ENCODE measurements at regions of chr18 and their contacts with region 1.

Region 1: GRCh38 chr18:47317824-47318508 is 66.5 kb upstream of the SKOR2 start:
- DNase-seq: no peak
- ATAC-seq: no peak
- H3K4me3 ChIP-seq: no peak overlapping the region
- H3K27ac ChIP-seq: no peak overlapping the region
- H3K4me1 ChIP-seq: no peaks in the 10 kb centered on the region
- H3K27me3 ChIP-seq: no peaks in the 10 kb centered on the region; a peak in 1 of 5 replicates
- CTCF ChIP-seq: no peak
- EP300 ChIP-seq: no peak
- POLR2A ChIP-seq: no peak
- RAD21 ChIP-seq: no peak

Region 2: DNA sequence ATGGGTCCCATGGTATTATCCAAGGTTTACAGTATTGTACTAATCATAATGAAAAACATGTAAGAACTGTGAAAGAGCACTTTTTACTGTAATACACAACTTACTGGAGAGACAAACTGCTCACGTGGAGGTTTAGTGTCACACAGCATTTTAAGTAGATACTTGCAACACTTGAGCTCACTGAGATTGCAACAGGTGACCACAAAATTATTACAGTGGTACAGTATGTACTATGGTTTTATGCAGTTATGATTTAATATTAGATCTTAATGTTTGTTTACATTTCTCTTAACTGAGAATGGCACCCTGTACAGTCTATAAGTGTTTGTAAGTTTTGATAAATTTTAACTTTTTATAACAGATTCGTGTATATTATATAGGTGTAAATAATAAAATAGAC is 52.1 kb after region 1 on chr18:
- CTCF ChIA-PET with region 1: no interaction called
- POLR2A ChIA-PET with region 1: no interaction called
- in situ Hi-C with region 1: no loop called
- intact Hi-C with region 1: loop called (anchors 5 kb)
- DNase-seq: no peak
- ATAC-seq: no peak
- H3K4me3 ChIP-seq: no peak overlapping the region
- H3K27ac ChIP-seq: no peak overlapping the region
- H3K4me1 ChIP-seq: no peaks in the 10 kb centered on the region
- H3K27me3 ChIP-seq: no peaks in the 10 kb centered on the region
- CTCF ChIP-seq: no peak
- EP300 ChIP-seq: no peak
- POLR2A ChIP-seq: no peak
- RAD21 ChIP-seq: no peak

Region 3: GRCh38 chr18:47380153-47380552 is 62.2 kb after region 1 on chr18:
- CTCF ChIA-PET with region 1: no interaction called
- POLR2A ChIA-PET with region 1: no interaction called
- in situ Hi-C with region 1: no loop called
- intact Hi-C with region 1: no loop called
- DNase-seq: no peak
- ATAC-seq: no peak
- H3K4me3 ChIP-seq: no peak overlapping the region
- H3K27ac ChIP-seq: no peak overlapping the region
- H3K4me1 ChIP-seq: no peaks in the 10 kb centered on the region
- H3K27me3 ChIP-seq: peaks cover 0 to 11% of the 10 kb centered on the region in 2 experiments; a peak in 1 of 5 replicates
- CTCF ChIP-seq: no peak
- EP300 ChIP-seq: no peak
- POLR2A ChIP-seq: no peak
- RAD21 ChIP-seq: no peak

Region 4: DNA sequence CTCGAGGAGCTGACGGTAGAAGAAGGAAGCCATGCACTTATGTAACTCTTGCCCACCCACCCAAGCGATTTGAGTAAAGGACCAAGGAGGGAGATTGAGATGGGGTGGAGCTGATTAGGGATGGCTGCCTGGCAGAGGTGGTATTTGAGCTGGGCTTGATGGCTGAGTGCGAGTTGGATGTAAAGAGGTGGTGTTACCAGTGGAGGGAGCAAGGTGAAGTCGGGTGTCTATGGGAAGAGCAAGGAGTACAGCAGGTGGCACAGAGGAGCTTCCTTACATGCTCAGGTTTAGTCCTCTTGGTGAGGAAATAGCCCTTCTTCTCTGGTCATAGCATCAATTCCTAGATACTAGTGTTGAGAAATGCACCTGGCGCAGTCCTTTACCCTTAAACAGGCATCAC is 227.6 kb after region 1 on chr18:
- CTCF ChIA-PET with region 1: no interaction called
- POLR2A ChIA-PET with region 1: no interaction called
- in situ Hi-C with region 1: no loop called
- intact Hi-C with region 1: no loop called
- DNase-seq: peak; percentile 14
- ATAC-seq: peak; percentile 63
- H3K4me3 ChIP-seq: no peak overlapping the region
- H3K27ac ChIP-seq: no peak overlapping the region
- H3K4me1 ChIP-seq: no peaks in the 10 kb centered on the region
- H3K27me3 ChIP-seq: peaks cover 2 to 10% of the 10 kb centered on the region in 2 experiments; a peak in 2 of 5 replicates
- CTCF ChIP-seq: 0 out of 2 replicates have a peak, but pooled peaks have one; percentile 11
- EP300 ChIP-seq: no peak
- POLR2A ChIP-seq: no peak
- RAD21 ChIP-seq: no peak

Measured in HepG2 (cell line).